GM12878 (cell line): ENCODE measurements at regions of chr17 and their contacts with region 1.

Region 1: GRCh38 chr17:57243171-57243948 is 13.0 kb upstream of the MSI2 start:
- DNase-seq: peak; percentile 50
- ATAC-seq: peak; percentile 93
- H3K4me3 ChIP-seq: no peak overlapping the region
- H3K27ac ChIP-seq: no peak overlapping the region
- H3K4me1 ChIP-seq: no peaks in the 10 kb centered on the region
- H3K27me3 ChIP-seq: no peaks in the 10 kb centered on the region
- CTCF ChIP-seq: peak; percentile 100; a peak in 5 of 6 replicates
- EP300 ChIP-seq: no peak
- POLR2A ChIP-seq: no peak
- RAD21 ChIP-seq: peak; percentile 97

Region 2: GRCh38 chr17:56653877-56654276 is 589.5 kb before region 1 on chr17:
- CTCF ChIA-PET with region 1: no interaction called
- POLR2A ChIA-PET with region 1: no interaction called
- RAD21 ChIA-PET with region 1: no interaction called
- SMC1A ChIA-PET with region 1: no interaction called
- in situ Hi-C with region 1: no loop called
- intact Hi-C with region 1: no loop called
- DNase-seq: peak; percentile 26
- ATAC-seq: peak; percentile 100
- H3K4me3 ChIP-seq: no peak overlapping the region
- H3K27ac ChIP-seq: no peak overlapping the region
- H3K4me1 ChIP-seq: no peaks in the 10 kb centered on the region
- H3K27me3 ChIP-seq: no peaks in the 10 kb centered on the region
- CTCF ChIP-seq: peak; percentile 72 to 74 (median 73)
- EP300 ChIP-seq: no peak
- POLR2A ChIP-seq: no peak
- RAD21 ChIP-seq: peak; percentile 67

Region 3: DNA sequence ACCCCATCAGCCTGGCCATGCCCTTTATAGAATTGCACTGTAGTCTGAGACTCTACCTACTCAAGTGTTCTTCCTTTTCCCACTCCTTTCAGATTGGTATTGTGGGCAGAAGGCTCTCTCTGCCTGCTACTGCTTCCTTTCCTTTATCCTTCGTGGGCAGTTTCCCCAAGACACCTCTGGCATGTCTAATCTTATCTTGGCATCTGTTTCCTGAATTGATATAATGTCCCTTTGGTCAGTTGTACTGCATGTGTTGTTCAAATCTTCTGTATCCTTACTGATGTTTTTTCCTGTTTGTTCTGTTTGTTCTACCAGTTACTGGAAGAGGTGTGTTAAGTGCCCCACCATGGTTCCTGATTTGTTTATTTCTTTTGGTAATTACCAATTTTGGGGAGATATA is 16.6 kb before region 1 on chr17:
- CTCF ChIA-PET with region 1: interaction called, 14 read pairs
- POLR2A ChIA-PET with region 1: no interaction called
- RAD21 ChIA-PET with region 1: interaction called, 3 read pairs
- SMC1A ChIA-PET with region 1: interaction called, 5 read pairs
- in situ Hi-C with region 1: no loop called
- intact Hi-C with region 1: no loop called
- DNase-seq: no peak
- ATAC-seq: no peak
- H3K4me3 ChIP-seq: no peak overlapping the region
- H3K27ac ChIP-seq: no peak overlapping the region
- H3K4me1 ChIP-seq: no peaks in the 10 kb centered on the region
- H3K27me3 ChIP-seq: no peaks in the 10 kb centered on the region
- CTCF ChIP-seq: no peak
- EP300 ChIP-seq: no peak
- POLR2A ChIP-seq: no peak
- RAD21 ChIP-seq: no peak

Region 4: GRCh38 chr17:57357399-57357807 is 114.0 kb after region 1 on chr17:
- CTCF ChIA-PET with region 1: interaction called, 29 read pairs
- POLR2A ChIA-PET with region 1: interaction called, 3 read pairs
- RAD21 ChIA-PET with region 1: interaction called, 26 read pairs
- SMC1A ChIA-PET with region 1: interaction called, 17 read pairs
- in situ Hi-C with region 1: no loop called
- intact Hi-C with region 1: no loop called
- DNase-seq: no peak
- ATAC-seq: peak; percentile 81
- H3K4me3 ChIP-seq: peak overlapping the region; percentile 40
- H3K27ac ChIP-seq: peak overlapping the region; percentile 96
- H3K4me1 ChIP-seq: peaks cover 59% of the 10 kb centered on the region
- H3K27me3 ChIP-seq: no peaks in the 10 kb centered on the region
- CTCF ChIP-seq: no peak
- EP300 ChIP-seq: no peak; a peak in 1 of 4 replicates
- POLR2A ChIP-seq: peak; percentile 68
- RAD21 ChIP-seq: no peak

Region 5: GRCh38 chr17:57432520-57433277 is 189.3 kb after region 1 on chr17:
- CTCF ChIA-PET with region 1: interaction called, 26 read pairs
- POLR2A ChIA-PET with region 1: no interaction called
- RAD21 ChIA-PET with region 1: interaction called, 6 read pairs
- SMC1A ChIA-PET with region 1: interaction called, 10 read pairs
- in situ Hi-C with region 1: no loop called
- intact Hi-C with region 1: no loop called
- DNase-seq: no peak
- ATAC-seq: no peak
- H3K4me3 ChIP-seq: no peak overlapping the region
- H3K27ac ChIP-seq: no peak overlapping the region
- H3K4me1 ChIP-seq: peaks cover 10% of the 10 kb centered on the region
- H3K27me3 ChIP-seq: no peaks in the 10 kb centered on the region
- CTCF ChIP-seq: no peak
- EP300 ChIP-seq: no peak
- POLR2A ChIP-seq: no peak
- RAD21 ChIP-seq: no peak

Region 6: GRCh38 chr17:57486873-57487301 is 243.5 kb after region 1 on chr17:
- CTCF ChIA-PET with region 1: interaction called, 10 read pairs
- POLR2A ChIA-PET with region 1: no interaction called
- RAD21 ChIA-PET with region 1: interaction called, 7 read pairs
- SMC1A ChIA-PET with region 1: interaction called, 6 read pairs
- in situ Hi-C with region 1: no loop called
- intact Hi-C with region 1: no loop called
- DNase-seq: no peak
- ATAC-seq: peak; percentile 53
- H3K4me3 ChIP-seq: no peak overlapping the region
- H3K27ac ChIP-seq: peak overlapping the region; percentile 72
- H3K4me1 ChIP-seq: peaks cover 35% of the 10 kb centered on the region
- H3K27me3 ChIP-seq: no peaks in the 10 kb centered on the region
- CTCF ChIP-seq: no peak
- EP300 ChIP-seq: no peak
- POLR2A ChIP-seq: no peak
- RAD21 ChIP-seq: no peak

Region 7: DNA sequence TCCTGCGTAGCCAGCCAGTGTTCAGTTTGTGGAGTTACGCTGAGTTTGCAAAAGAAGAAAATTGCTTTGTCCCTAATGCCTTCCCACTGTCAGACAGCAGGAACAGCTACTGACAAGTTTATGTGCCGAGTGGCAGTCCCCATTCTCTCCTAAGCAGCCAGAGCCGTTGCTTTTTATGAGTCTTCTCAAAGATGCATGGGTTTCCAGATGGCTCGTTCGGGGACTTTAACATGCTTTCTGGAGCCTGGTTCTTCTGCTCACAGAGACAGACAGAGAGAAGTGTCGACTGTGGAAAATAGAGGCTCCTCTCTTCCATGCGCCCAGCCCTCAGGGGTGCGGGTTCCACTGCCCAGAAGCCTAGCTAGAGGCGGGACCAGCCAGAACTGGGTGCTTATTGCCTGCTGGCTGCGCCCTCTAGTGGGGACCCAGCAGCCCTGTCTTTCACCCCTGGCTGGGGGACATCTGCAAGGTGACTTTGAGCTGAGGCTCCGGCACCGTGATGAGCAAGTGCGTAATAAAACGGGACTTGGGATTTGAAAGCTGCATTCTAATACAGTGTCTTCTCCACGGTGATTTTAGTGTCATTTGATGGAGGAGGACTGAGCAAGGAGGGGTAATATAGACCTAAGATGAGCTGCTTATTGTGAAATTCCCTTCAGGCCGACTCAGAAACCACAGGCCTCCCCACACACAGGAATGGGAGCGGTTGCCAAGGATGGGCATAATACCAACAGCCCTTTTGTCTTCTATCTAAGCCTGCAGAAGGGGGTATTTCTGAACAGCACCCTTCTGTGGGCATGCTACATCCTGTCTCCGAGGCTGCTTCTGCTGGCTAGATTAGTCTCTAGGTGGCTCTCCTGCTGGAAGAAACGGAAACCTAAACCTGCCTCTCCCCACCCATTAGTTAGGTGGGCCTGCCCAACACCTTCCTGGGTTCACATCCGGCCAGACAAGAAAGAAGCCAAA is 428.6 kb after region 1 on chr17:
- CTCF ChIA-PET with region 1: interaction called, 88 read pairs
- POLR2A ChIA-PET with region 1: no interaction called
- RAD21 ChIA-PET with region 1: interaction called, 42 read pairs
- SMC1A ChIA-PET with region 1: interaction called, 57 read pairs
- in situ Hi-C with region 1: no loop called
- intact Hi-C with region 1: loop called (anchors 2 kb)
- DNase-seq: no peak
- ATAC-seq: peak; percentile 100
- H3K4me3 ChIP-seq: no peak overlapping the region
- H3K27ac ChIP-seq: no peak overlapping the region
- H3K4me1 ChIP-seq: peaks cover 4% of the 10 kb centered on the region; the same call in 1 of the 2 replicates
- H3K27me3 ChIP-seq: no peaks in the 10 kb centered on the region
- CTCF ChIP-seq: peak; percentile 90 to 95 (median 93)
- EP300 ChIP-seq: no peak
- POLR2A ChIP-seq: no peak
- RAD21 ChIP-seq: peak; percentile 82